Tibial artery (tissue), 4 donors: ENCODE measurements at regions of chr21 and their contacts with region 1.

Region 1: DNA sequence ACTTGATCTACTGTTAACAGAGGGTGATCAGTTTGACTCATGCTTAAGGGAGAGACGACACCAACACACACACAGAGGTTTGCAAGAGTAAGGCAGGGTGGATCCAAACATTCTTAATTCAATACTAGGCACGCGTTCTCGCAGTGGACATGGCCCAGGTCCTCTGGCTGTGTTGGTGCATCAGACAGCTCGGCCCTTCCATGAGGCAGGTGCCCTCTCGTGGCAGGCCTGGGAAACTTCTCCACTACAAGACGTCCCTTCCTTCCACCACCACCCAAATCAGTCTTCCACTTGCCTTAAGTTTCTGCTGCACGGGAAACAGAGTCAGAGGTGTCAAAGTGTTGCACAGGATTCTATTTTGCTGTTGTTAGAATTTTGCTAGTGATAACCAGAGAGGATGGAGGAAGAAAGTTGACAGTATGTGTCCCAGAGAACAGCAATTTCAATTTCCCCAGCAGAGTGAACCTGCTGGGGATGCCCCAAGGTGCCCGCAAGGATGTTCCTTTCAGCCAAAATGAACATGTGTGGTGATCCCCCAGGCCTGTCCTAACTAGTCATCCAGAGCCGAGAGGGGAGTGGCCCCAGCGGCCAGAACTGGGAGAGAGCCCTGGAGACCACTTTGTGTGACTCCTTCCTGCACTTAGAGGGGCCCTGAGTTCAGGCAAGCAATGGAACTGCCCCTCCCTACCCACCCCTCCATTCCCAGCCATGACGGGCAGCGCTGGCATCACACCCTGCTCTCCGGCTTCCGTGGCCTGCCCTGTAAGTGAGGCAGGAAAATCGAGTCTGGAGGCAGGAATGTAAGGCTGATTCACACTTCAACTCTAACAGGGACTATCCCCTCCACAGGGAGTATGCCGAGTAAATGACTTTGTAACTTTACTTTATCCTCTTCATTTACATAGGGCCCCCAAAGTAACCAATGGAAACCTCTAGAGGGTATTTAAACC is 34.8 kb downstream of the MX1 start:
- DNase-seq: peak; percentile 84
- H3K4me3 ChIP-seq: no peak overlapping the region
- H3K27ac ChIP-seq: no peak overlapping the region
- H3K4me1 ChIP-seq: peaks cover 0 to 4% (median 0%) of the 10 kb centered on the region in 4 donors
- H3K27me3 ChIP-seq: peaks cover 0 to 9% of the 10 kb centered on the region in 2 donors
- CTCF ChIP-seq: peak; percentile 84

Region 2: DNA sequence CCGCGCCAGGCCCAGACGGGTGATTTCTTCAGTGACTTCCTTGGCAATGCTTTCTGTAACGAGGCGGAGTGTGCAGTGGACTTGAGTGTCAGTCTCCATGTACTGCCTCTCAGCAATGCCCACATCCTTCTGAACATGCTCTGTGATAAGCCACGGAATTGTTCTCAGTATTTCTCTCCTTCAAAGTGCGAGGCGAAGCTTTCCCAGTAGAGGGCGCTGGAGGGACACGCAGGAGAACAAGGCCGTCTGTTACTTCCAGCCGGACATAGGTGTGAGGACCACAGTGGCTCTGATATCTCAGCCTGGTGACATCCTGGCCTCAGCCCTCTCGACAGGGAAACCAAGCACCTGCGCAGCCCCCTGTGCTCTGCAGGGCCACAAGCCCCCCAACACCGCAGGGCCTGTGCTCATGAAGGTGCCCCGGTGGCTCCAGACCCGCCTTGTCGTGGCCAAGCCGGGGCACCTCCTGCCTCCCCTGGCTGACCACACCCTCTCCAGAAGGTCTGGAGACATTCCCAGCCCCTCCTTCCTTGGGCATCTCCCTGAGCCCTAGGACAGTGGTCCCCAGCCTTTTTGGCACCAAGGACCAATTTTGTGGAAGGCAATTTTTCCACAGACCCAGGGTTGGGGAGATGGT is 338.9 kb before region 1 on chr21:
- intact Hi-C with region 1: loop called (anchors 5 kb)
- DNase-seq: peak; percentile 92 to 94
- H3K4me3 ChIP-seq: no peak overlapping the region
- H3K27ac ChIP-seq: no peak overlapping the region
- H3K4me1 ChIP-seq: peaks cover 0 to 19% (median 6%) of the 10 kb centered on the region in 4 donors
- H3K27me3 ChIP-seq: peaks cover 0 to 7% of the 10 kb centered on the region in 2 donors
- CTCF ChIP-seq: peak; percentile 85 to 97

Region 3: DNA sequence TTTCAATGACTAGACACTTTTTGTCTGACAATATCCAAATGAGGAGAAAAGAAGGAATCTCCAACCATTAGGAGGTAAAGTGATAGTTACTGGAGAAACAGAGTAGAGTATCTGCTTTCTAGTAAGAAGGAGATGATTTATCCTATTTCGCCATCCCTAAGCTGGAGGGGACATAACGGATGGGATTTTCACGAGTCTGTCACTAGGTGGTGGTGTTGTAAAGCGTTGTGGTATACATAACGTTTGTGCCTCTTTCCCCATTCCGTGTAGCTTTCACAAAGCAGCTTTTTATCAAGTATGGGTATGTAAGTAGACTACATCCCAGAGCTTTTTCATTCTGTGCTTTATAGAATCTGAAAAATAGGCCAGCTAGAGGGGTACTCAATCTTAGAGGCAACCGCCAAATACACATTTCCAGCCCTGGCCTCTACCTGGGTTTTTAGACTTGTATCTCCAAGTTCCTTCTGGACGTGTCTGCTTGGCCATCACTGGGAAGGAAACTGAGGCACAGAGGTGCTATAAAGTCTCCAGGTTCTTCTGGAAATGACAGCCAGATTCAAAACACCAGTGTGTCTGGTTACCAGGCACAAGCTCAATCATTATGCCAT is 177.5 kb before region 1 on chr21:
- intact Hi-C with region 1: loop called (anchors 2 kb)
- DNase-seq: no peak
- H3K4me3 ChIP-seq: no peak overlapping the region
- H3K27ac ChIP-seq: no peak overlapping the region
- H3K4me1 ChIP-seq: peaks cover 0 to 10% (median 2%) of the 10 kb centered on the region in 4 donors
- H3K27me3 ChIP-seq: no peaks in the 10 kb centered on the region
- CTCF ChIP-seq: peak; percentile 80 to 83

Region 4: GRCh38 chr21:41387042-41387750 is 73.7 kb before region 1 on chr21:
- intact Hi-C with region 1: no loop called
- DNase-seq: no peak
- H3K4me3 ChIP-seq: no peak overlapping the region
- H3K27ac ChIP-seq: peak overlapping the region in 1 of 2 donors; percentile 1
- H3K4me1 ChIP-seq: no peaks in the 10 kb centered on the region
- H3K27me3 ChIP-seq: no peaks in the 10 kb centered on the region
- CTCF ChIP-seq: no peak

Region 5: GRCh38 chr21:41507496-41508299 is 46.8 kb after region 1 on chr21 and contains the start of gene TMPRSS2:
- intact Hi-C with region 1: no loop called
- DNase-seq: no peak
- H3K4me3 ChIP-seq: peak within 1 kb of the TSS; percentile 6 to 21
- H3K27ac ChIP-seq: no peak within 1 kb of the TSS
- H3K4me1 ChIP-seq: peaks cover 0 to 25% (median 20%) of the 10 kb centered on the region in 4 donors
- H3K27me3 ChIP-seq: peaks cover 0 to 65% of the 10 kb centered on the region in 2 donors
- CTCF ChIP-seq: no peak